HCT116 (cell line): ENCODE measurements at regions of chr6 and their contacts with region 1.

Region 1: GRCh38 chr6:26568601-26569432 is 27.9 kb upstream of the ABT1 start:
- DNase-seq: peak; percentile 92
- ATAC-seq: peak; percentile 48
- H3K4me3 ChIP-seq: peak overlapping the region; percentile 35 to 51
- H3K27ac ChIP-seq: no peak overlapping the region
- H3K4me1 ChIP-seq: peaks cover 2 to 59% of the 10 kb centered on the region in 2 experiments; a peak in 3 of 4 replicates
- H3K27me3 ChIP-seq: no peaks in the 10 kb centered on the region
- CTCF ChIP-seq: no peak
- POLR2A ChIP-seq: no peak
- RAD21 ChIP-seq: peak; percentile 4; the same call in 1 of the 2 replicates

Region 2: DNA sequence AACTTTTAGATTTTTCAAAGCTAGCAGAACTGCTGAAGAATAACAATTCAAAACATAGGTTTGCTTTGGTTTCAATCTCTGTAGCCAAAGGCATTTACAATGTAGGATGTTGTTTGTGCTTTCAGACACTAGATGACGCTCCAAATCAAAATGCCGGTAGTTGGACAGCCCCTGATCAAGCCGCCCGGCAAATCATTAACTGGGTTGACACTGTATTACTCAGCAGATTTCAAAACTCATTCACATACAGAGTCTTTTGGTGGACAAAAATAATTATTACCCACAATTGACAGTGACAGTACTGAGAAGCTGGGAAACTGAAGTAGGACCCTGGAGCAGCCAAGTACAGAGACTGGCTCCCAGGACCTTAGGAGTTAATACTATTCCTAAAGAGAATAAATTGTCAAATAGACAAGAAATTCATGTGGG is 502.9 kb before region 1 on chr6:
- CTCF ChIA-PET with region 1: no interaction called
- POLR2A ChIA-PET with region 1: no interaction called
- RAD21 ChIA-PET with region 1: no interaction called
- intact Hi-C with region 1: loop called (anchors 10 kb)
- DNase-seq: peak; percentile 79
- ATAC-seq: peak; percentile 81
- H3K4me3 ChIP-seq: no peak overlapping the region
- H3K27ac ChIP-seq: peak overlapping the region; percentile 37; the same call in 1 of the 2 replicates
- H3K4me1 ChIP-seq: peaks cover 18 to 29% of the 10 kb centered on the region in 2 experiments; a peak in 3 of 4 replicates
- H3K27me3 ChIP-seq: no peaks in the 10 kb centered on the region
- CTCF ChIP-seq: peak; percentile 77 to 92 (median 86)
- POLR2A ChIP-seq: no peak
- RAD21 ChIP-seq: peak; percentile 94

Region 3: DNA sequence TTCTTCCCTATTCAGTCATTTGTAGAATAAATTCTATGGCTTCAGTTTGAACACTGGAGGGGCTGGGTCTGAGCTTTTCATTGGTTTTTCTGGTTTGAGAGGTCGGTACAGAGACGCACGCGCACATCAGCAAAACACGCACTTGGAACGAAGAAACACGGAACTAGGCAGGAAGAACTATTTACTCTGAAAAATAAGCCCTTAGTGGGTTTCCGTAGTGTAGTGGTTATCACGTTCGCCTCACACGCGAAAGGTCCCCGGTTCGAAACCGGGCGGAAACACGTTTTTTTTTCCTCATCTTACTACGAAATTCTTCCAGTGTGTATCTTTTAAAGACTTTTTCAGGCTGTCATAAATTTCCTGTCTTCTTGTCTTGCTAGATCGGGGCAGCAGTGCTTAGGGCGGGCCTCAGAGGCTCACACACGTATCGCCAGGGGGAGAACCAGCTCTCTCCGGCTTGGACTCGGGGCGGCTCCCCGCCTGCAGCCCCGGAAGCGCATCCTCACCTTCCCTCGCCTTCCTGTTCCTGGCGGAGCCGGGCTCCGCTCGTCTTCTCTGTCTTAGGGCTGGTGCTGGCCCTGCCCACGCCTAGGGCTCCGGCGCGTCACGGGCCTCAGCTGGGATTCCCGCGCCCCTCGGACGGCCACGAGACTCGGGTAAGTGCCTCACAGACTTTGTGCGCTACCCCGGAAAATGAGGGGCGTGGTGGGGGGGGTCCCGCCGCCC is 30.8 kb before region 1 on chr6 and contains the start of gene HMGN4:
- CTCF ChIA-PET with region 1: interaction called, 3 read pairs
- POLR2A ChIA-PET with region 1: interaction called, 3 read pairs
- RAD21 ChIA-PET with region 1: no interaction called
- intact Hi-C with region 1: loop called (anchors 1 kb)
- DNase-seq: peak; percentile 81
- ATAC-seq: peak; percentile 73
- H3K4me3 ChIP-seq: peak within 1 kb of the TSS; percentile 74 to 89
- H3K27ac ChIP-seq: peak within 1 kb of the TSS; percentile 72
- H3K4me1 ChIP-seq: peaks cover 14 to 51% of the 10 kb centered on the region in 2 experiments
- H3K27me3 ChIP-seq: no peaks in the 10 kb centered on the region
- CTCF ChIP-seq: no peak
- POLR2A ChIP-seq: no peak
- RAD21 ChIP-seq: 0 out of 2 replicates have a peak, but pooled peaks have one; percentile 17
- total RNA-seq, gene HMGN4: 73.8 TPM

Region 4: GRCh38 chr6:26553635-26554446 is 15.0 kb before region 1 on chr6:
- CTCF ChIA-PET with region 1: interaction called, 4 read pairs
- POLR2A ChIA-PET with region 1: interaction called, 7 read pairs
- RAD21 ChIA-PET with region 1: interaction called in 1 of 2 experiments, 7 read pairs
- intact Hi-C with region 1: loop called (anchors 1 kb)
- DNase-seq: peak; percentile 81
- ATAC-seq: peak; percentile 58
- H3K4me3 ChIP-seq: peak overlapping the region; percentile 36 to 50
- H3K27ac ChIP-seq: peak overlapping the region; percentile 53
- H3K4me1 ChIP-seq: peaks cover 14 to 45% of the 10 kb centered on the region in 2 experiments
- H3K27me3 ChIP-seq: no peaks in the 10 kb centered on the region
- CTCF ChIP-seq: no peak
- POLR2A ChIP-seq: no peak
- RAD21 ChIP-seq: peak; percentile 9; the same call in 1 of the 2 replicates

Region 5: GRCh38 chr6:26596579-26597388 is 28.0 kb after region 1 on chr6 and contains the start of gene ABT1:
- CTCF ChIA-PET with region 1: interaction called, 28 read pairs
- POLR2A ChIA-PET with region 1: interaction called, 8 read pairs
- RAD21 ChIA-PET with region 1: interaction called, 4 to 8 read pairs
- intact Hi-C with region 1: loop called (anchors 1 kb)
- DNase-seq: peak; percentile 97
- ATAC-seq: peak; percentile 74
- H3K4me3 ChIP-seq: peak within 1 kb of the TSS; percentile 94 to 98
- H3K27ac ChIP-seq: peak within 1 kb of the TSS; percentile 80
- H3K4me1 ChIP-seq: peaks cover 19 to 43% of the 10 kb centered on the region in 2 experiments
- H3K27me3 ChIP-seq: no peaks in the 10 kb centered on the region
- CTCF ChIP-seq: no peak
- POLR2A ChIP-seq: peak; percentile 80
- RAD21 ChIP-seq: no peak; the same call in 1 of the 2 replicates
- total RNA-seq, gene ABT1: 26.7 TPM

Region 6: DNA sequence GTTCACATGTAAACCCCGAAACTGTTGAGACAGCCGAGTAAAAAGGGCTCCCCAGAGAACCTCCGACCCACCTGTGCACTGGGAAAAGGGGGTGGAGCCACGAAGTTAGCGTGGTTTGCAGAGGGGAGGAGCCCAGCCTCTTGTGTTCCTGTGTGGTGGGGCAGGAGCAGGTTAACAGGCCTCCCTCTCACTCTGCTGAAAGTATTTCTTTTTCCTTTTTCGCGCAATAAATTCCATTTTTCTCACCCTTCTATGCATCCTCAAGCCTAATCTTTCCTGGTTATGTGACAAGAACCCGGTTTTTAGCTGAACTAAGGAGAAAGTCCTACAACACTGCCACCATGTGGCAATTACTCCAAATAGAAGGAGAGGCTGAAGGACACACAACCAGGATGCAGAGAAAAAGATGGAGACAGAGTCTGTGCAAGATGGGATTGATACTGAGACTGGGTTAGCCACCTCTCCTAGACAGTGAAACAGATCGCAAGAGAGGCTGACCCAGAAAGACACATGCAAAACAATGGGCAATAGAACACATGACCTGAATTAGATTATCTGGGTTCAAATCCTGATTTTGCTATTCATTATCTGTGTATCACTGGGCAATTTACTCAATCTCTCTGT is 510.0 kb after region 1 on chr6:
- CTCF ChIA-PET with region 1: no interaction called
- POLR2A ChIA-PET with region 1: no interaction called
- RAD21 ChIA-PET with region 1: no interaction called
- intact Hi-C with region 1: loop called (anchors 1 kb)
- DNase-seq: peak; percentile 52
- ATAC-seq: peak; percentile 99
- H3K4me3 ChIP-seq: peak overlapping the region; percentile 34 to 47
- H3K27ac ChIP-seq: no peak overlapping the region
- H3K4me1 ChIP-seq: peaks cover 0 to 10% of the 10 kb centered on the region in 2 experiments; a peak in 2 of 4 replicates
- H3K27me3 ChIP-seq: no peaks in the 10 kb centered on the region
- CTCF ChIP-seq: peak; percentile 72 to 90 (median 80)
- POLR2A ChIP-seq: no peak
- RAD21 ChIP-seq: peak; percentile 90

Region 7: DNA sequence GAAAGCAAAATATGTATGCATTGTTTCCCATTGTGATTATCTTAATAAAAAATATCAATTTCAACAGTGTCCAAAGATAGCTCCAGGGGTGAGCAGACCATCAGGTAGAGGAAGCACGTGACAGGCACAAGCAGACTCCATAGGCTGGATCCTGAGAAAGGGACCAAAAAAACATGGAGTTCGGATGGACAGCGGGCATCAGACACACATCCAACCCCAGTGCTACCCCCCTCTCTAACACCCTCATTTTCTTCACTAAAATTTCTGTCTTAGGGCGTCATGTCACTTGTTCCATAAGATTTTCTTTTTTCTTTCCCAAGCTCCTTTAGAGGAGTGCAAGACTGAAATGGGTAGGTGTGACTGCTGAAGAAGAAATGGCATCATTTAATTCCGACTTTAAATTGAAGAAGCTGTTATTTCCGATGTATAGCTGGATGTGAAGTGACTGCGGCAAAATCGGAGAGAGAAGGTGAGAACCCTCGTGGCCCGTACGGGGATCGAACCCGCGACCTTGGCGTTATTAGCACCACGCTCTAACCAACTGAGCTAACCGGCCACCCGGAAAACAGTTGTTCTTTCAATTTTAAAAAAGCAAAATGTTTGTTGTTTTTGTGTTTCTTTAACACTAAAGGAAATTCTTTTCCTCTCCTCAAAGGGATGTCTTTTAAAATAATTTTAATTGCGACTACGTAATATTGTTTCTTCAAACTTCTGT is 668.4 kb after region 1 on chr6:
- CTCF ChIA-PET with region 1: no interaction called
- POLR2A ChIA-PET with region 1: no interaction called
- RAD21 ChIA-PET with region 1: no interaction called
- intact Hi-C with region 1: loop called (anchors 10 kb)
- DNase-seq: peak; percentile 67
- ATAC-seq: peak; percentile 86
- H3K4me3 ChIP-seq: no peak overlapping the region
- H3K27ac ChIP-seq: peak overlapping the region; percentile 6; the same call in 1 of the 2 replicates
- H3K4me1 ChIP-seq: peaks cover 8 to 23% of the 10 kb centered on the region in 2 experiments; a peak in 3 of 4 replicates
- H3K27me3 ChIP-seq: no peaks in the 10 kb centered on the region
- CTCF ChIP-seq: no peak
- POLR2A ChIP-seq: no peak
- RAD21 ChIP-seq: no peak